ENCODE measurements at regions of chr11 and their contacts with region 1.

Region 1: GRCh38 chr11:94741022-94741679 is 27.0 kb upstream of the AMOTL1 start:
- DNase-seq: peak; percentile 73
- H3K4me3 ChIP-seq: peak overlapping the region; percentile 52 to 71 (median 63)
- H3K27ac ChIP-seq: no peak overlapping the region
- H3K4me1 ChIP-seq: peaks cover 22% of the 10 kb centered on the region
- H3K27me3 ChIP-seq: no peaks in the 10 kb centered on the region
- CTCF ChIP-seq: peak; percentile 30 to 42
- POLR2A ChIP-seq: no peak

Region 2: GRCh38 chr11:94574193-94574961 is 166.8 kb before region 1 on chr11:
- CTCF ChIA-PET with region 1: no interaction called
- POLR2A ChIA-PET with region 1: no interaction called
- dilution Hi-C with region 1: no loop called
- intact Hi-C with region 1: no loop called
- DNase-seq: no peak
- H3K4me3 ChIP-seq: no peak overlapping the region
- H3K27ac ChIP-seq: no peak overlapping the region
- H3K4me1 ChIP-seq: peaks cover 5% of the 10 kb centered on the region
- H3K27me3 ChIP-seq: no peaks in the 10 kb centered on the region
- CTCF ChIP-seq: no peak
- POLR2A ChIP-seq: no peak

Region 3: GRCh38 chr11:94757037-94757735 is 16.0 kb after region 1 on chr11:
- CTCF ChIA-PET with region 1: interaction called, 34 read pairs
- POLR2A ChIA-PET with region 1: interaction called, 12 read pairs
- dilution Hi-C with region 1: no loop called
- intact Hi-C with region 1: no loop called
- DNase-seq: no peak
- H3K4me3 ChIP-seq: no peak overlapping the region
- H3K27ac ChIP-seq: no peak overlapping the region
- H3K4me1 ChIP-seq: peaks cover 7% of the 10 kb centered on the region
- H3K27me3 ChIP-seq: no peaks in the 10 kb centered on the region
- CTCF ChIP-seq: no peak
- POLR2A ChIP-seq: no peak

Region 4: GRCh38 chr11:94762208-94762607 is 21.1 kb after region 1 on chr11:
- CTCF ChIA-PET with region 1: interaction called, 34 read pairs
- POLR2A ChIA-PET with region 1: no interaction called
- dilution Hi-C with region 1: no loop called
- intact Hi-C with region 1: no loop called
- DNase-seq: peak; percentile 47
- H3K4me3 ChIP-seq: no peak overlapping the region
- H3K27ac ChIP-seq: no peak overlapping the region
- H3K4me1 ChIP-seq: peaks cover under 1% of the 10 kb centered on the region
- H3K27me3 ChIP-seq: no peaks in the 10 kb centered on the region
- CTCF ChIP-seq: peak; percentile 52 to 58
- POLR2A ChIP-seq: no peak

Region 5: GRCh38 chr11:94786264-94787126 is 45.3 kb after region 1 on chr11:
- CTCF ChIA-PET with region 1: interaction called, 12 read pairs
- POLR2A ChIA-PET with region 1: no interaction called
- dilution Hi-C with region 1: no loop called
- intact Hi-C with region 1: no loop called
- DNase-seq: peak; percentile 63
- H3K4me3 ChIP-seq: no peak overlapping the region
- H3K27ac ChIP-seq: no peak overlapping the region
- H3K4me1 ChIP-seq: peaks cover 20% of the 10 kb centered on the region
- H3K27me3 ChIP-seq: no peaks in the 10 kb centered on the region
- CTCF ChIP-seq: peak; percentile 36 to 57
- POLR2A ChIP-seq: no peak

Region 6: DNA sequence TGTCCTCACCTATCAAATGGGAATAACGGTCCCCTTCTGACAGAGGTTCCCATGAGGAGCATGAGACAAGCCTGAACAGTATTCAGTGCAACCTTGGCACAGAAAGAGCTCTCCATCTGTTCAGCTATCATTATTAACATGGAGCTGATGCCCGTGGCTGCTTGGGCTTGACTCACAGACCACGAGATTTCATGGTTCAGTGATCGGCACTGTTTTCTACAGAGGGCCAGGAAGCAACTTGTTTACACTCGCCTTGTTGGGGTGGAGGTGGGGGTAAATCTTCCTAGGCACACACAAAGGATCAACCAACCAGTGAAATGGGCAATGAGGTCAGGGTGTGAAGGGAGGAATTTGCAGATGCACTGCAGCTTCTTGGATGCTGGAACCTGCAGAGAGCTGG is 144.0 kb after region 1 on chr11:
- CTCF ChIA-PET with region 1: no interaction called
- POLR2A ChIA-PET with region 1: no interaction called
- dilution Hi-C with region 1: no loop called
- intact Hi-C with region 1: no loop called
- DNase-seq: no peak
- H3K4me3 ChIP-seq: no peak overlapping the region
- H3K27ac ChIP-seq: no peak overlapping the region
- H3K4me1 ChIP-seq: no peaks in the 10 kb centered on the region
- H3K27me3 ChIP-seq: no peaks in the 10 kb centered on the region
- CTCF ChIP-seq: no peak
- POLR2A ChIP-seq: no peak

Measured in endothelial cell of umbilical vein (primary cell).